Panc1 (cell line): ENCODE measurements at regions of chr7 and their contacts with region 1.

Region 1: DNA sequence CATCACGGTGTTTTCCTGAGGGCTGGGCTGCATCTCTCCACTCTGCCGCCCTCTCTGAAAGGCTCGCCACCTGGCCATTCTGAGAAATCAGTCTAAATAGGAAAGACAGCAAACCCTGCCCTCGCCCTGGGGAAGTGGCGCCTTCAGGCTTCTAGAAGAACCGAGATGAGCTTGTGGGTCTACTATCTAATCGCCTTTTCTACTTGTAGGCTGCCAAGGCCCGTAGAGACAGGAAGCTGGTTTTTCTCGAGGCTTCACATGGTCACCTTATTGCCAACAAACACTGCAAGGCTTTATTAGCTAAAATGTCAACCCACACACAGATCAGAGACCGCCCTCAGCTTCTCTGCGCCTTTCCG is 21.4 kb downstream of the LAT2 start:
- DNase-seq: no peak
- ATAC-seq: no peak
- H3K4me3 ChIP-seq: no peak overlapping the region
- H3K27ac ChIP-seq: no peak overlapping the region
- H3K4me1 ChIP-seq: no peaks in the 10 kb centered on the region
- H3K27me3 ChIP-seq: no peaks in the 10 kb centered on the region
- CTCF ChIP-seq: no peak

Region 2: GRCh38 chr7:74199551-74200242 is 31.5 kb before region 1 on chr7:
- CTCF ChIA-PET with region 1: no interaction called
- POLR2A ChIA-PET with region 1: no interaction called
- in situ Hi-C with region 1: no loop called
- intact Hi-C with region 1: no loop called
- DNase-seq: no peak
- ATAC-seq: peak; percentile 50
- H3K4me3 ChIP-seq: no peak overlapping the region
- H3K27ac ChIP-seq: no peak overlapping the region
- H3K4me1 ChIP-seq: no peaks in the 10 kb centered on the region
- H3K27me3 ChIP-seq: no peaks in the 10 kb centered on the region
- CTCF ChIP-seq: no peak

Region 3: GRCh38 chr7:74365322-74366022 is 134.3 kb after region 1 on chr7:
- CTCF ChIA-PET with region 1: no interaction called
- POLR2A ChIA-PET with region 1: interaction called, 10 read pairs
- in situ Hi-C with region 1: no loop called
- intact Hi-C with region 1: no loop called
- DNase-seq: no peak
- ATAC-seq: peak; percentile 77
- H3K4me3 ChIP-seq: no peak overlapping the region
- H3K27ac ChIP-seq: no peak overlapping the region
- H3K4me1 ChIP-seq: no peaks in the 10 kb centered on the region
- H3K27me3 ChIP-seq: no peaks in the 10 kb centered on the region
- CTCF ChIP-seq: no peak